CD8-positive, alpha-beta T cell (primary cell): ENCODE measurements at regions of chr6 and their contacts with region 1.

Region 1: DNA sequence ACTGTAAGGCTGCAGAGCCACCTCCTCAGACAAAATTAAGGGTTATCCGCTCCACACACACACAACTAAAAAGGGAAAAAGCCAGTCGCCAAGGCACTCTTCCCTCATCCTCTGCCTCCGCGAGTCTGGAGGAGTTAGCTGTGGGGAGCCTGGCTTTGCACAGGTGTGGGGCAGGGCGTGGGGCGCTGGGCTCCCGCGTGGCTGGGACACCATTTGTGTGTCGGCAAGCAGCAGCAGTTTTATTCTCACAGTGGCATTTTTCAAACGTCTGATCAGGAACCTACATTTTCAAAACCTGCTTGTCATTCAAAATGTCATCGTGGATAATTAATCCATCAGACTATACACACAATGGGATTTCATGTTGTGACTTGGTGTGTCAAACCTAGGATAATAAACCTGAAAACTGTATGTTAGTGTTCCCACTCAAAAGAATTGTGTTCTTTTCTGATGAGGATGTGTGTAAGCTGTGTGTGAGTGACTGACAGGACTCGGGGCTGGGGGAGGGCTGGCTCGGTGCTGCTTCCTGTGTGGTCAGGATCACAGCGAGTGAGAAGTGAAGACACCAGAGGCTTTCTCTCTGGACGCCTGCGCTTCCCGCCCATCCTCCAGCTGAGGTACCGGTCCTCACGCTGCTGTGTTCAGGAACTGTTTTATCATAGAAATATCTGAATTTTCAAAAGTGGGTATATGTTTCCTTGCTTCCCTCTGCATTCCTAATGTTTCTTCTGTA is 83.1 kb downstream of the IRF4 start:
- DNase-seq: peak; percentile 33 to 87 (median 76)
- ATAC-seq: peak; percentile 97
- H3K4me3 ChIP-seq: peak overlapping the region; percentile 1 to 26
- H3K4me3 Mint-ChIP-seq: peak overlapping the region; percentile 74
- H3K27ac ChIP-seq: peak overlapping the region in 1 of 2 experiments; percentile 39
- H3K27ac Mint-ChIP-seq: peak overlapping the region; percentile 64
- H3K4me1 ChIP-seq: peaks cover 25% of the 10 kb centered on the region
- H3K4me1 Mint-ChIP-seq: peaks cover 46% of the 10 kb centered on the region
- H3K27me3 ChIP-seq: no peaks in the 10 kb centered on the region
- H3K27me3 Mint-ChIP-seq: peaks cover 2% of the 10 kb centered on the region
- CTCF ChIP-seq: no peak

Region 2: GRCh38 chr6:373751-374724 is 100.6 kb before region 1 on chr6:
- CTCF ChIA-PET with region 1: no interaction called
- POLR2A ChIA-PET with region 1: no interaction called
- intact Hi-C with region 1: no loop called
- DNase-seq: no peak
- ATAC-seq: no peak
- H3K4me3 ChIP-seq: no peak overlapping the region
- H3K4me3 Mint-ChIP-seq: no peak overlapping the region
- H3K27ac ChIP-seq: no peak overlapping the region
- H3K27ac Mint-ChIP-seq: no peak overlapping the region
- H3K4me1 ChIP-seq: peaks cover 6% of the 10 kb centered on the region
- H3K4me1 Mint-ChIP-seq: peaks cover 13% of the 10 kb centered on the region
- H3K27me3 ChIP-seq: no peaks in the 10 kb centered on the region
- H3K27me3 Mint-ChIP-seq: peaks cover 22% of the 10 kb centered on the region
- CTCF ChIP-seq: no peak

Region 3: GRCh38 chr6:446418-447366 is 27.9 kb before region 1 on chr6:
- CTCF ChIA-PET with region 1: no interaction called
- POLR2A ChIA-PET with region 1: interaction called, 9 read pairs
- intact Hi-C with region 1: loop called in 1 of 2 experiments (anchors 1 kb)
- DNase-seq: peak in 8 of 9 experiments; percentile 72 to 90 (median 80)
- ATAC-seq: peak; percentile 76
- H3K4me3 ChIP-seq: peak overlapping the region; percentile 37 to 43
- H3K4me3 Mint-ChIP-seq: peak overlapping the region; percentile 71
- H3K27ac ChIP-seq: no peak overlapping the region
- H3K27ac Mint-ChIP-seq: peak overlapping the region; percentile 88
- H3K4me1 ChIP-seq: peaks cover 43% of the 10 kb centered on the region
- H3K4me1 Mint-ChIP-seq: peaks cover 48% of the 10 kb centered on the region
- H3K27me3 ChIP-seq: no peaks in the 10 kb centered on the region
- H3K27me3 Mint-ChIP-seq: no peaks in the 10 kb centered on the region
- CTCF ChIP-seq: no peak

Region 4: GRCh38 chr6:490251-491037 is 15.8 kb after region 1 on chr6:
- CTCF ChIA-PET with region 1: interaction called, 8 read pairs
- POLR2A ChIA-PET with region 1: interaction called, 18 read pairs
- intact Hi-C with region 1: loop called in 1 of 2 experiments (anchors 2 kb)
- DNase-seq: peak in 1 of 9 experiments; percentile 39
- ATAC-seq: peak; percentile 45
- H3K4me3 ChIP-seq: no peak overlapping the region
- H3K4me3 Mint-ChIP-seq: peak overlapping the region; percentile 48
- H3K27ac ChIP-seq: peak overlapping the region in 1 of 2 experiments; percentile 59
- H3K27ac Mint-ChIP-seq: peak overlapping the region; percentile 89
- H3K4me1 ChIP-seq: peaks cover 64% of the 10 kb centered on the region
- H3K4me1 Mint-ChIP-seq: peaks cover 71% of the 10 kb centered on the region
- H3K27me3 ChIP-seq: no peaks in the 10 kb centered on the region
- H3K27me3 Mint-ChIP-seq: no peaks in the 10 kb centered on the region
- CTCF ChIP-seq: no peak

Region 5: DNA sequence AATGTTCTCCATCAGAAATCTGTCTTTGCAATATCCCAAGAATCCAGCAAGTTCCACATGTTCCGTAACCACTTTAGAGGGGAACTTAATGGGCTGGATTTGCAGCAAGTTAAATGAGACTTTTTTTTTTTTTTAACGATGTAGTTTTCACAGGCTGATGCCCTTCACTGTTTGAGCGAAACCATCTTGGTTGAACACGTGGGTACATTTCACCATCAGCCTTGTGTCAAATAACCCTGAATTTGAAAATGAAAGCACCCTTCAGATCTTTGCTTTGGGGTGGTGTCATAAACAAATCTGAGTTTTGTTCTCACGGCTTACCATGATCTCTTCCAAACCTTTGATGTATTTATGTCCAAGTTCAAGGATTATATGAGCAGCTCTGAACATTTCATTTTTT is 292.0 kb after region 1 on chr6:
- CTCF ChIA-PET with region 1: no interaction called
- POLR2A ChIA-PET with region 1: no interaction called
- intact Hi-C with region 1: no loop called
- DNase-seq: no peak
- ATAC-seq: no peak
- H3K4me3 ChIP-seq: no peak overlapping the region
- H3K4me3 Mint-ChIP-seq: no peak overlapping the region
- H3K27ac ChIP-seq: no peak overlapping the region
- H3K27ac Mint-ChIP-seq: no peak overlapping the region
- H3K4me1 ChIP-seq: no peaks in the 10 kb centered on the region
- H3K4me1 Mint-ChIP-seq: no peaks in the 10 kb centered on the region
- H3K27me3 ChIP-seq: no peaks in the 10 kb centered on the region
- H3K27me3 Mint-ChIP-seq: peaks cover 18% of the 10 kb centered on the region
- CTCF ChIP-seq: no peak